ENCODE measurements at regions of chr19 and their contacts with region 1.

Region 1: DNA sequence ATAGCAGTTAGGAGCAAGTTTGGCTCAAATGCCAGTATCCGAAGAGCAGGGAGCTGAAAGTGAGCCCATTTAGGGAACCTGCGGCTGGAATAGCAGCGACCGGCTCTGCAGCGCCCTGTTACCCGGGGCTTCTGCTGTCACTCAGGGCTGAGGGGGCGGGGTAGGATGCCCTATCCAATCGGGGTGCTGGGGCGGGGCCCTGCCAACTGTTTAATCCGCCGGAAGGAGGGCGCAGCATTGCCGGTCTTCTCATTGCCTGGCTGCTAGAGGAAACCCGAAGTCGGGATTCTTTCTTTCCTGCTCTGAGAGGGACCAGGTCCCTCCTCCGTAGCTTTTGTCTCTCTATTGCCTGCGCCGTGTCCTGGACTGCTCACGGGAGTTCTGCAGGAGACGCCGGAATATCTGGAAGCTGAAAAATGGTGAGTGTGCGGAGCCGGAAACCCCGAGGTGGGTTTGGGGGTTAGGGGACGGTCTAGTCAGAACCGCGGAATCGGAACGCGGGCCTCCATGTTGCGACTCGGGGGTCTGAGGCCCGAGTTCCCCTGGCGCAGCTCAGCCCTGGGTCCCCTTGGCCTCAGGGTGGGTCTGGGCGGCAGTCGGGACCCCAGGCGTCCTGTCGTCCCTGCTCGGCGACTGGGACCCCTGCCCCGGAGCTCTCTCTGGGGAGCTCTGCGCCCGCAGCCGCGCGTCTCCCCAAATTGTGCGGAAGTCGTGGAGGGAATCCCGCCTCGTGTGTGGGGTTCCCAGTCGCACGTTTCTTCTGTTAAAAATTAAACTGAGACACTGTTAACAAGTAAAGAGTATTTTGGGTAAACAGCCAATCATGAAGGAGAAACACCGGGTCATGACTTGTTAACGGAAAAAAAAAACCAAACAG is 22.8 kb downstream of the ZNF763 start:
- DNase-seq: peak; percentile 98
- ATAC-seq: peak; percentile 99

Region 2: GRCh38 chr19:11806354-11807098 is 181.1 kb before region 1 on chr19:
- intact Hi-C with region 1: loop called (anchors 10 kb)
- DNase-seq: no peak
- ATAC-seq: no peak

Region 3: GRCh38 chr19:11924886-11925650 is 62.6 kb before region 1 on chr19 and contains the start of gene ZNF700:
- intact Hi-C with region 1: loop called (anchors 2 kb)
- DNase-seq: peak; percentile 96
- ATAC-seq: peak; percentile 99
- total RNA-seq, gene ZNF700: 4.2 TPM

Region 4: DNA sequence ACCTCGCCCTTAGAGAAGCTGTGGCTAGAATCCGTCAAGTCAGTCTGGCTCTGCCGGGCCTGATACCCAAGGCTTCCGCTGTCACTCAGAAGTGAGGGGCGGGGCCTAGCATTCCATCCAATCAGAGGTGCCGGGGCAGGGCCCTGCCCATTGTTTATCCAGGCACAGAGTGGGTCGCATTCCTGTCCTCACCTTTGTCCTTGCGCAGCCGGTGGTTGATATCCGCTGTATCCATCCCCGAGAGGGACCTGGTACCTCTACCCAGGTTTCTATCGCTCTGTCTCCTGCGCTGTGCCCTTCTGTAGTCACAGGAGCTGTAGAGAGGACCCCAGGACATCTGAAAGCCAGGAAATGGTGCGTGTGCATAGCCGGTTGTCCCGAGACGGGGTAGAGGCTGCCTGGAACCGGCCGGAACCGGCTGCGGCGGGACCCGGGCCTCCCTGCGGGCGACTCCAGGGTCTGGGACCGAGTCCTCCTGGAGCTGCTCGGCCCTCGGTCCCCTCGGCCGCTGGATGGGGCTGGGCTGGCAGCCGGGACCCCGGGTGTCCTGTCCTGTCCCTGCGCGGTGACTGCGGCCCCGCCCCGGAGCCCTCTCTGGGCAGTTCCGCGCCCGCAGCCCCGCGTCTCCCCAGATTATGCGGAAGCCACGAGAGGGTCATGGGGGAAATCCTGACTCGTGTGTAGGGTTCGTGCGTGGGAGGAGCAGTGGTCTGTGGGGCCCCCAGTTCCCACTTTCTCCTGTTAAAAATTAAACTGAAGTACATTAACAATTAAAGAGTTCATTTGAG is 22.6 kb before region 1 on chr19 and contains the start of gene ZNF763:
- intact Hi-C with region 1: loop called (anchors 1 kb)
- DNase-seq: peak; percentile 97
- ATAC-seq: peak; percentile 100
- total RNA-seq, gene ZNF763: 3.7 TPM